GM12878 (cell line): ENCODE measurements at regions of chr12 and their contacts with region 1.

Region 1: DNA sequence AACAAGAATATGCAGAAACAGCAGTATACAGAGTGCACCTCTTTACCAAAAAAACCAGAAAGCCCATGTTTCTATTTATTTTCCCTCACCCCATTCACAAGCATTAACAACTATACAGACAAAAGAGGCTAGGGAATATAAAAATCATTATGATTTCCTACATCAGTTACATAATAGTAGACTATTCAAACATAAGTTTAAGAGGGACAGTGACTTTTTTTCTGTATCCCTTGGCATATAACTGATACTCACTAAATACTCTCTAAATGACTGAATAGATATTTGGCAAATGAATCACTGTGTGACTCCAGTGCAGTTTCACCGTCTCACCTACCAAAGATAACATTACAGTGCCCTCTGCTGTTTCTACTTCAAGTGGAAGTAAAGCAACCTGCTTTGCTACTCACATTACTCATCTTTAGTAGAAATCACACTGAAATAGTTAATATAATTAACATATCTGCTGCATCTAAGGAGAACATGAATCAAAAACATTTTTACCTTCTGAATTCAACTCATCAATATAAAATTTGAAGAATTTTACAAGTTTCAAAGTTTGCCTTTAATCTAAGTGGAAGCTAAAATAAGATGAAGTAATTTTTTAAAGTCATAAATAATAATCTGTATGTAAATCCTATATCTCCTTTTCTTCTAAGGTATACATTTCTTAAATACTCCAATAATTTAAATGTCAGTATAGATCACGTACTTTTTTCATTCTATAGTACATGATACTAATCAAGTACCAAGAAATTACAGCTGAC is 103.8 kb downstream of the OSBPL8 start:
- DNase-seq: peak; percentile 33
- ATAC-seq: peak; percentile 99
- H3K4me3 ChIP-seq: no peak overlapping the region
- H3K27ac ChIP-seq: no peak overlapping the region
- H3K4me1 ChIP-seq: no peaks in the 10 kb centered on the region
- H3K27me3 ChIP-seq: no peaks in the 10 kb centered on the region
- CTCF ChIP-seq: peak; percentile 54 to 73 (median 71); a peak in 5 of 6 replicates
- EP300 ChIP-seq: no peak
- POLR2A ChIP-seq: no peak
- RAD21 ChIP-seq: peak; percentile 89

Region 2: GRCh38 chr12:75334384-75335030 is 1121.3 kb before region 1 on chr12 and contains the start of gene GLIPR1L1:
- CTCF ChIA-PET with region 1: no interaction called
- POLR2A ChIA-PET with region 1: no interaction called
- RAD21 ChIA-PET with region 1: interaction called, 4 read pairs
- SMC1A ChIA-PET with region 1: no interaction called
- in situ Hi-C with region 1: no loop called
- intact Hi-C with region 1: loop called (anchors 10 kb)
- DNase-seq: peak; percentile 44
- ATAC-seq: peak; percentile 83
- H3K4me3 ChIP-seq: peak within 1 kb of the TSS; percentile 57; the same call in 1 of the 2 replicates
- H3K27ac ChIP-seq: no peak within 1 kb of the TSS
- H3K4me1 ChIP-seq: peaks cover 4% of the 10 kb centered on the region
- H3K27me3 ChIP-seq: no peaks in the 10 kb centered on the region
- CTCF ChIP-seq: peak; percentile 83 to 90 (median 89)
- EP300 ChIP-seq: no peak
- POLR2A ChIP-seq: no peak
- RAD21 ChIP-seq: peak; percentile 87
- polyA plus RNA-seq, gene GLIPR1L1: 0.10 to 0.13 TPM

Region 3: DNA sequence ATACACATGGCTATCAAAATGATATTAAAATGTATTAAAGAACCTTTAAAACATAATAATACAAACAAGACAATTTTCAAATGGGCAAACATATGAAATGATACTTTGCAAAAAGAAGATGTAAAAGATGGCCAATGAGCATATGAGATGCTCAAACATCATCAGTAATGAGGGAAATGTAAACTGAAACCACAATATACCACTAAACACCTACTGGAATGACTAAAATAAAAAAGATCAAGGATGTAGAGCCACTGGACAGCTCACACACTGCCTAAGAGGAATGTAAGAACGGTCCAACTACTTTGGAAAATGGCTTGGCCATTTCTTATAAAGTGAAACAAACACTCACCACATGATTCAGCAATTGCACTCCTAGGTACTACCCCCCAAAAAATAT is 10.3 kb before region 1 on chr12:
- CTCF ChIA-PET with region 1: interaction called, 38 read pairs
- POLR2A ChIA-PET with region 1: no interaction called
- RAD21 ChIA-PET with region 1: interaction called, 6 read pairs
- SMC1A ChIA-PET with region 1: interaction called, 16 read pairs
- in situ Hi-C with region 1: no loop called
- intact Hi-C with region 1: no loop called
- DNase-seq: no peak
- ATAC-seq: peak; percentile 69
- H3K4me3 ChIP-seq: no peak overlapping the region
- H3K27ac ChIP-seq: no peak overlapping the region
- H3K4me1 ChIP-seq: no peaks in the 10 kb centered on the region
- H3K27me3 ChIP-seq: no peaks in the 10 kb centered on the region
- CTCF ChIP-seq: no peak
- EP300 ChIP-seq: no peak
- POLR2A ChIP-seq: no peak
- RAD21 ChIP-seq: no peak

Region 4: DNA sequence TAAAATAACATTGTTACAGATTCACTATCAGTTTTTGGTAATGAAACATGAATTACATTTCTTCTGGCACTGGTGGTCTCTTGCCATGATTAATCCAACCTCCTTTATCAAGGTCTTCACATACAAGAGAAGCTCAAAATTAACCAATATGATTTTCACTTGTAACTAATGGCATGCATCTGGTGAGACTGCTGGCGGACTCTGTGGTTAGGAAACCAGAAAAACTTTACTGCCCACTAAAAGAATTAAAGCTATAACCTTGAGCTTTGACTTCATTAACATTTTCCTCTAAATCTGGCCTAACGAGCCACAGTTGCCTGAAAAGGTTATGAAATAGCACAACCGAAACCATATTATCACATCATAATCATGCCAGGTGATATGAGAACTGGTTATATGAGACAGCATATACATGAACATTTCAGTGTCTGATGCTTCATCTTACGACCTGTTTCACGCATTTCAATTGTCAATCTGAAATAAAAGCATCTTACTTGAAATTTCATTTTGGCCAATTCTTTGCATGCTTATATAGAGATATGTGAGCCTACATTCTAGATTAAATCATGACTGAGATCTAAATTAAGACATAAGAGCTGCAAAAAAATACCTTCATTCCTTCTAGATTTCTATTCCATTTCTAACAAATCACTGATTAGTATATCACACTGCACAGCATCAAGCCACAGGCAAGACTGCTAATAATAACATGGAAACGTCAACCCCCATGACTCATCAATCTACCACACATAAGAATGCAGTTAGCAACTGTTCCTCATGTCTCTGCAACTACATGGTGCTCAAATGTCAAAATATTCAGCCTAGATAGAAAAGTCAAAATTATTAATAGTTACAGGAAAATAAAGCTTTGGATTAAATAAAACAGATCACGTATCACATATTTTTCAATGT is 14.5 kb after region 1 on chr12:
- CTCF ChIA-PET with region 1: interaction called, 50 read pairs
- POLR2A ChIA-PET with region 1: interaction called, 3 read pairs
- RAD21 ChIA-PET with region 1: interaction called, 11 read pairs
- SMC1A ChIA-PET with region 1: interaction called, 16 read pairs
- in situ Hi-C with region 1: no loop called
- intact Hi-C with region 1: no loop called
- DNase-seq: peak; percentile 25
- ATAC-seq: peak; percentile 96
- H3K4me3 ChIP-seq: no peak overlapping the region
- H3K27ac ChIP-seq: no peak overlapping the region
- H3K4me1 ChIP-seq: peaks cover 13% of the 10 kb centered on the region
- H3K27me3 ChIP-seq: no peaks in the 10 kb centered on the region
- CTCF ChIP-seq: no peak
- EP300 ChIP-seq: no peak
- POLR2A ChIP-seq: no peak
- RAD21 ChIP-seq: no peak

Region 5: DNA sequence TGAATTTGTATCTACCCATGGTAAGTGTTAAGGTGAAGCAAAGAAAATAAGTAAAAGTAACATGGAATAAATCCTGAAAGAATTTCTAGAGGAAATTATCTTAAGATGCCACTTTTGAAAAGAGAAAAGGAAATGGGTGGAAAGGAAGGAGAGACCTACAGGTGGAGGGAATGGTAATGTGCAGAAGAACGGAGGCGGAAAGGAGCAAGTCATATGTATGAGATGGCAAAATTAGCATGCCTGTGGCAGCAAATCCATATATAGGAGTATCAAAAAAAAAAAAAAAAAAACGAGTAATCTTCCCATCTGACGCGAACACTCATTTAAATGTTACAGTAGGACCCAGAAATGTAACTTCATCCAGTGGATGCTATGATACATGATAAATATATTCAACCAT is 80.8 kb after region 1 on chr12:
- CTCF ChIA-PET with region 1: no interaction called
- POLR2A ChIA-PET with region 1: no interaction called
- RAD21 ChIA-PET with region 1: no interaction called
- SMC1A ChIA-PET with region 1: no interaction called
- in situ Hi-C with region 1: no loop called
- intact Hi-C with region 1: no loop called
- DNase-seq: no peak
- ATAC-seq: no peak
- H3K4me3 ChIP-seq: no peak overlapping the region
- H3K27ac ChIP-seq: no peak overlapping the region
- H3K4me1 ChIP-seq: no peaks in the 10 kb centered on the region
- H3K27me3 ChIP-seq: no peaks in the 10 kb centered on the region
- CTCF ChIP-seq: no peak
- EP300 ChIP-seq: no peak
- POLR2A ChIP-seq: no peak
- RAD21 ChIP-seq: no peak

Region 6: DNA sequence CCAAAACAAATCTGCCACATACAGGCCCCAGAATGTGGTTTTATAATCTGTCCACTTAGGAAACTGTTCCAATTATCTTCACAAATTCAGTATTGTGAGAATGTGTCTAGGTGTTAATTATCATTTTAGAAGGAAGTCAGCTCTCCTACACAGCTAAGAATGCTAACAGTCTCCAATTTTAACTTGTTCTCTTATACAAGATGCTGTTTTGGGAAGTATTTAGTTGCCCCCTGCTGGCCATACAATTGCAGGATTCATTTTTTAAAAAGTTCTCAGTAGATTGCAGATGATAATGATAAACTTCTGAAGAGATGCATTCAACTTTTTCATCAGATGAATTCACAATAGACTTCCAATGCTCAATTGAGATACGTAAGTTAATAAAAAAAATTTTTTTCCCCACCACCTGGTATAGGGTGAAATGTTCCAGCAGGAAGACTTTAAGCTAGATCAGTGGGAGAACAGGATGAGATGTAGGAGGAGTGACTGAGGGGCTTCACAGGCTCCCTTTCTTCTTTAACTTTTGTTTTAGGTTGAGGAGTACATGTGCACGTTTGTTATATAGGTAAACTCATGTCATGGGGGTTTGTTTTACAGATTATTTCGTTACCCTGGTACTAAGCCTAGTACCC is 131.1 kb after region 1 on chr12:
- CTCF ChIA-PET with region 1: interaction called, 9 read pairs
- POLR2A ChIA-PET with region 1: no interaction called
- RAD21 ChIA-PET with region 1: interaction called, 7 read pairs
- SMC1A ChIA-PET with region 1: interaction called, 12 read pairs
- in situ Hi-C with region 1: no loop called
- intact Hi-C with region 1: loop called (anchors 2 kb)
- DNase-seq: no peak
- ATAC-seq: peak; percentile 82
- H3K4me3 ChIP-seq: no peak overlapping the region
- H3K27ac ChIP-seq: no peak overlapping the region
- H3K4me1 ChIP-seq: no peaks in the 10 kb centered on the region
- H3K27me3 ChIP-seq: no peaks in the 10 kb centered on the region
- CTCF ChIP-seq: peak; percentile 54 to 69 (median 68); a peak in 5 of 6 replicates
- EP300 ChIP-seq: no peak
- POLR2A ChIP-seq: no peak
- RAD21 ChIP-seq: peak; percentile 85

Region 7: GRCh38 chr12:76706101-76706500 is 250.3 kb after region 1 on chr12:
- CTCF ChIA-PET with region 1: no interaction called
- POLR2A ChIA-PET with region 1: no interaction called
- RAD21 ChIA-PET with region 1: no interaction called
- SMC1A ChIA-PET with region 1: no interaction called
- in situ Hi-C with region 1: no loop called
- intact Hi-C with region 1: no loop called
- DNase-seq: no peak
- ATAC-seq: peak; percentile 23; the same call in 2 of the 3 replicates
- H3K4me3 ChIP-seq: no peak overlapping the region
- H3K27ac ChIP-seq: no peak overlapping the region
- H3K4me1 ChIP-seq: no peaks in the 10 kb centered on the region
- H3K27me3 ChIP-seq: no peaks in the 10 kb centered on the region; a peak in 1 of 4 replicates
- CTCF ChIP-seq: no peak
- EP300 ChIP-seq: no peak
- POLR2A ChIP-seq: no peak
- RAD21 ChIP-seq: no peak